MCF 10A (cell line): ENCODE measurements at regions of chr20 and their contacts with region 1.

Region 1: DNA sequence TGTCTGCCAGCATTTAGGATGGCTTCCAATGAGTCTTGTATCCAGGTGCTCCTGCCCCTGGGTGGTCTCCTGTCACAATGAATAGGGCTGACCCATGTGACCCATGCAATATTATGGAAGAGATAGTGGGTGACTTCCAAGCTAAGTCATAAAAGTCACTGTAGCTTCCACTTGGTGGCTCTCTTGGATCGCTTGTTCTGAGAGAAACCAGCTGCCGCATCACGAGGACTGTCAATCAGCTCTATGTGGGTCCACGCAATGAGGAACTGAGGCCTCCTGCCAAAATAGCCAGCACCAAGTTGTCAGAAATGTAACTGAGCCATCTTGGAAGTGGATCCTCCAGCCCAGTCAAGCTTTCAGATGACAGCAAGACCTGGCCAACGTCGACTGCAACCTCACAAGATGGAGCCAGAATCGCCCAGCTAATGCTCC is 14.9 kb upstream of the MATN4 start:
- DNase-seq: peak; percentile 77
- H3K4me3 Mint-ChIP-seq: no peak overlapping the region
- H3K27ac Mint-ChIP-seq: peak overlapping the region; percentile 59
- H3K4me1 Mint-ChIP-seq: peaks cover 6% of the 10 kb centered on the region
- H3K27me3 Mint-ChIP-seq: no peaks in the 10 kb centered on the region
- CTCF ChIP-seq: peak; percentile 8

Region 2: DNA sequence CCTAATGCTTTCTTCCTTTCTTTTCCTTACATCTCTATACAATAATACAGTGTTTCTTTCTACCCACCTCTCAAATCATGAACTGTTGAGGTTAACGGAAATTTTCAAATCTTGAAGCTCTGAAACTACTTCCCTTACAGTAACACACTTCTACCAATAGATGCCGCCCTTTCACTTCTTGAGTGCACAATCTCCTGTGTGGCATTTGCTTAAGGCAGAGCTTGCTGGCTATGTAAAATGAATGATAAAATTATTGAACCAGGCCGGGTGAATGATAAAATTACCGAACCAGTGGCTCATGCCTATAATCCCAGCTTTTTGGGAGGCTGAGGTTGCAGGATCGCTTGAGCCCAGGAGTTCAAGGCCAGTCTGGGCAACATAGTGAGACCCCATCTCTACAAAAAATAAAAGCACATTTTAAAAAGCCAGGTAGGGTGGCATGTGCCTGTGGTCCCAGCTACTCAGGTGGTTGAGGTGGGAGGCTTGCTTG is 278.8 kb before region 1 on chr20:
- CTCF ChIA-PET with region 1: interaction called, 15 read pairs
- POLR2A ChIA-PET with region 1: no interaction called
- intact Hi-C with region 1: no loop called
- DNase-seq: peak; percentile 88
- H3K4me3 Mint-ChIP-seq: no peak overlapping the region
- H3K27ac Mint-ChIP-seq: peak overlapping the region; percentile 73
- H3K4me1 Mint-ChIP-seq: peaks cover 33% of the 10 kb centered on the region
- H3K27me3 Mint-ChIP-seq: no peaks in the 10 kb centered on the region
- CTCF ChIP-seq: peak; percentile 90

Region 3: DNA sequence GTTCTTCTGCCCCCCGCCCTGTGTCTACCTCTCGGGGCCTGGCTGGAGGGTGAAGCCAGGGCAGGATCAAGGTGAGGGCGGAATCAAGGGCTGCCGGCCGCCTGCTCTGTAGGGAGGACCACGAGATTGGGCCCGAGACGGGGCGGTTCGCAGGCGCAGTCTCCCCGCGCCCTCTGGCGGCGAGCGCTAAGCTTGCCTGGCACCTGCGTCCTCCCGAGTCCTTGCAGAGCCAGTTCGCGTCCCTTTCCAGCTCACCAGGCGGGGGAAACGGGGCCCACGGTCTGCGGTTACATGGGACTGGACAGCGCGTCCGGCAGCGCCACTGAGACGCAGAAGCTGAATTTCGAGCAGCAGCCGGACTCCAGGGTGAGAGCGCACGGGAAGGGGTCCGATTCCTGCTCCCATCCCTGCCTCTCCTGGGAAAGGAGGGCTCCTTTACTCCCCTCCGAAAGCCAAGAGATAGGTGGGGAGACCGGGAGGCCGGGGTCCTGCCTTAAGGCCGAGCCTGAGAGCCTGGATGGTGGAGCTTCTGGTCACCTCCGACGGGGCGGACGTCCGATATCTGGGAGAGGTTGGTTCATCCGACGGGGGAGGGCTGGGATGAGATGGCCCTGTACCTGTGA is 11.3 kb before region 1 on chr20:
- CTCF ChIA-PET with region 1: interaction called, 10 read pairs
- POLR2A ChIA-PET with region 1: interaction called, 3 read pairs
- intact Hi-C with region 1: no loop called
- DNase-seq: peak; percentile 55
- H3K4me3 Mint-ChIP-seq: no peak overlapping the region
- H3K27ac Mint-ChIP-seq: no peak overlapping the region
- H3K4me1 Mint-ChIP-seq: no peaks in the 10 kb centered on the region
- H3K27me3 Mint-ChIP-seq: no peaks in the 10 kb centered on the region
- CTCF ChIP-seq: peak; percentile 80

Region 4: DNA sequence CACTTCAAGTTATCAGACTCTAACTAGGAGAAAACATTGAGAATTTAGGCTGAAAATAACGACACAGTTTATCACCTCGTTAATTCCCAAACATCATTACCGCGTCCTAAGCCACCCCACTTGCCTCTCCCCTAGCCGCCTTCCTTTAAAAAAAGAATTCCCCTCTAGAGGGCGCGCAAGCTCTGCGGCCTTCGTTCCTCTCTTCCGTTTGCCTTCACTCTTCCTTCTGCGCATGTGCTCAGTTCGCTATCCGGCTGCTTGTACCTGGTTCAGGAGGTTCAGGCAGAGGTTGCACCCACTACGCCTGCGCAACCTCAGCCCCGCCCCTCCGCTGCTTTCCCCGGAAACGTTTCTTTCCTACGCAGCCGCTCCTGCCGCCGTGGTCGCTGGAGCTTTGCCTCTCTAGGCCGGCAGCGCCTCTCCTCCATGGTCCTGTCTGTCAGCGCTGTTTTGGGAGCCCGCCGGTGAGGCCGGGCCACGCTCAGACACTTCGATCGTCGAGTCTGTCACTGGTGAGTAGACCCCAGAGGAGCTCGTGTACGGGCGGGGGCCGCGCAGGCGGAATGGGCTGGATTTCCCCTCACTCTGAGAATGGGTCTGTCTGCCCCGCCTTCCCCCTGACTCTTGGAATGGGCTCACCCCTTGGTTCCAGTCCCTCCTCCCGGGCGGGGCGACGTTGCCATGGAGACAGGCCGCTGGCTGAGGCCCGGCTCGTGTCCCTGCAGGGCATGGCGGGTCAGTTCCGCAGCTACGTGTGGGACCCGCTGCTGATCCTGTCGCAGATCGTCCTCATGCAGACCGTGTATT is 40.0 kb after region 1 on chr20 and contains the start of gene SYS1:
- CTCF ChIA-PET with region 1: interaction called, 29 read pairs
- POLR2A ChIA-PET with region 1: interaction called, 1,328 read pairs
- intact Hi-C with region 1: loop called (anchors 2 kb)
- DNase-seq: peak; percentile 99
- H3K4me3 Mint-ChIP-seq: peak within 1 kb of the TSS; percentile 97
- H3K27ac Mint-ChIP-seq: peak within 1 kb of the TSS; percentile 95
- H3K4me1 Mint-ChIP-seq: peaks cover 30% of the 10 kb centered on the region
- H3K27me3 Mint-ChIP-seq: no peaks in the 10 kb centered on the region
- CTCF ChIP-seq: peak; percentile 67
- total RNA-seq, gene SYS1: 19.1 and 28.2 TPM in 2 replicates

Region 5: GRCh38 chr20:45415774-45416637 is 93.0 kb after region 1 on chr20 and contains the start of gene PIGT:
- CTCF ChIA-PET with region 1: interaction called, 24 read pairs
- POLR2A ChIA-PET with region 1: interaction called, 7 read pairs
- intact Hi-C with region 1: no loop called
- DNase-seq: peak; percentile 81
- H3K4me3 Mint-ChIP-seq: peak within 1 kb of the TSS; percentile 90
- H3K27ac Mint-ChIP-seq: peak within 1 kb of the TSS; percentile 93
- H3K4me1 Mint-ChIP-seq: peaks cover 24% of the 10 kb centered on the region
- H3K27me3 Mint-ChIP-seq: no peaks in the 10 kb centered on the region
- CTCF ChIP-seq: no peak
- total RNA-seq, gene PIGT: 79.4 and 84.3 TPM in 2 replicates

Region 6: GRCh38 chr20:45450097-45450818 is 127.3 kb after region 1 on chr20:
- CTCF ChIA-PET with region 1: interaction called, 15 read pairs
- POLR2A ChIA-PET with region 1: no interaction called
- intact Hi-C with region 1: loop called (anchors 1 kb)
- DNase-seq: peak; percentile 55
- H3K4me3 Mint-ChIP-seq: no peak overlapping the region
- H3K27ac Mint-ChIP-seq: no peak overlapping the region
- H3K4me1 Mint-ChIP-seq: no peaks in the 10 kb centered on the region
- H3K27me3 Mint-ChIP-seq: peaks cover 1% of the 10 kb centered on the region
- CTCF ChIP-seq: peak; percentile 47